Caco-2 (cell line): ENCODE measurements at regions of chr9 and their contacts with region 1.

Region 1: GRCh38 chr9:96854073-96854876 is at the start of gene ZNF782:
- DNase-seq: peak; percentile 93 to 95
- H3K4me3 ChIP-seq: peak within 1 kb of the TSS; percentile 72
- H3K4me3 Mint-ChIP-seq: peak within 1 kb of the TSS; percentile 98
- H3K27ac Mint-ChIP-seq: peak within 1 kb of the TSS; percentile 98
- H3K4me1 ChIP-seq: peaks cover 34% of the 10 kb centered on the region
- H3K4me1 Mint-ChIP-seq: peaks cover 34% of the 10 kb centered on the region
- H3K27me3 ChIP-seq: no peaks in the 10 kb centered on the region
- H3K27me3 Mint-ChIP-seq: no peaks in the 10 kb centered on the region
- CTCF ChIP-seq: no peak
- total RNA-seq, gene ZNF782: 8.1 and 10.3 TPM in 2 replicates

Region 2: GRCh38 chr9:96449845-96450612 is 404.2 kb before region 1 on chr9 and contains the start of gene HABP4:
- CTCF ChIA-PET with region 1: interaction called, 3 read pairs
- POLR2A ChIA-PET with region 1: no interaction called
- intact Hi-C with region 1: loop called (anchors 10 kb)
- DNase-seq: peak; percentile 95 to 97
- H3K4me3 ChIP-seq: peak within 1 kb of the TSS; percentile 89
- H3K4me3 Mint-ChIP-seq: peak within 1 kb of the TSS; percentile 93
- H3K27ac Mint-ChIP-seq: peak within 1 kb of the TSS; percentile 76
- H3K4me1 ChIP-seq: 0 out of 2 replicates have a peak, but pooled peaks cover 3% of the 10 kb centered on the region
- H3K4me1 Mint-ChIP-seq: peaks cover 12% of the 10 kb centered on the region
- H3K27me3 ChIP-seq: no peaks in the 10 kb centered on the region
- H3K27me3 Mint-ChIP-seq: no peaks in the 10 kb centered on the region
- CTCF ChIP-seq: no peak
- total RNA-seq, gene HABP4: 24.8 and 26.7 TPM in 2 replicates

Region 3: GRCh38 chr9:96725576-96725975 is 128.7 kb before region 1 on chr9:
- CTCF ChIA-PET with region 1: no interaction called
- POLR2A ChIA-PET with region 1: no interaction called
- intact Hi-C with region 1: no loop called
- DNase-seq: no peak
- H3K4me3 ChIP-seq: no peak overlapping the region
- H3K4me3 Mint-ChIP-seq: no peak overlapping the region
- H3K27ac Mint-ChIP-seq: no peak overlapping the region
- H3K4me1 ChIP-seq: no peaks in the 10 kb centered on the region
- H3K4me1 Mint-ChIP-seq: no peaks in the 10 kb centered on the region
- H3K27me3 ChIP-seq: no peaks in the 10 kb centered on the region
- H3K27me3 Mint-ChIP-seq: peaks cover 3% of the 10 kb centered on the region
- CTCF ChIP-seq: no peak

Region 4: DNA sequence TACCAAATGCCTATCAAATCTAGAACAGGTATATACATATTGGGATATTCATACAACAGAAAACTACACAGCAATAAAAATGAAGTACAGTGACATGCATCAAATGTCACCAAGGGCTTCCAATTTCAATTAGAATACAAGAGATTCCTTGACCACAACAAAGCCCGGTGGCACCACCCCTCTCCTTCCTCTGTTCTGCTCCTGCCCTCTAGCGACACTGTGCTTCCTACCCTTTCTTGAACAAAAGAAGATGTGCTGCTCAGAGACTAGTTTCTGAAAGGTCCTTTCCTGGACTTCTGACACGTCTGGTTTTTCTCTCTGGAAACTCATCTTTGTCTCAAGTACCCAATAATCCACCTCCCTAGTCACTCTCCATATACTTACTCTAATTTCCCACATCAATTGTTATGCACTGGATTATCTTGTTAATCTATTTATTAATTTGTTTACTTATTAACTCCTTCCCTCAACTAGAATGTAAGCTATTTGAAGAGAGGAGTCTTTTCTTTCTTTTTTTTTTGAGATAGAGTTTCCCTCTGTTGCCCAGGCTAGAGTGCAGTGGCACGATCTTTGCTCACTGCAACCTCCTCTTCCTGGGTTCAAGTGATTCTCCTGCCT is 255.0 kb after region 1 on chr9:
- CTCF ChIA-PET with region 1: interaction called, 11 read pairs
- POLR2A ChIA-PET with region 1: no interaction called
- intact Hi-C with region 1: loop called (anchors 1 kb)
- DNase-seq: peak; percentile 78 to 81
- H3K4me3 ChIP-seq: no peak overlapping the region
- H3K4me3 Mint-ChIP-seq: no peak overlapping the region
- H3K27ac Mint-ChIP-seq: no peak overlapping the region
- H3K4me1 ChIP-seq: no peaks in the 10 kb centered on the region
- H3K4me1 Mint-ChIP-seq: no peaks in the 10 kb centered on the region
- H3K27me3 ChIP-seq: no peaks in the 10 kb centered on the region
- H3K27me3 Mint-ChIP-seq: no peaks in the 10 kb centered on the region
- CTCF ChIP-seq: peak; percentile 69 to 86

Region 5: DNA sequence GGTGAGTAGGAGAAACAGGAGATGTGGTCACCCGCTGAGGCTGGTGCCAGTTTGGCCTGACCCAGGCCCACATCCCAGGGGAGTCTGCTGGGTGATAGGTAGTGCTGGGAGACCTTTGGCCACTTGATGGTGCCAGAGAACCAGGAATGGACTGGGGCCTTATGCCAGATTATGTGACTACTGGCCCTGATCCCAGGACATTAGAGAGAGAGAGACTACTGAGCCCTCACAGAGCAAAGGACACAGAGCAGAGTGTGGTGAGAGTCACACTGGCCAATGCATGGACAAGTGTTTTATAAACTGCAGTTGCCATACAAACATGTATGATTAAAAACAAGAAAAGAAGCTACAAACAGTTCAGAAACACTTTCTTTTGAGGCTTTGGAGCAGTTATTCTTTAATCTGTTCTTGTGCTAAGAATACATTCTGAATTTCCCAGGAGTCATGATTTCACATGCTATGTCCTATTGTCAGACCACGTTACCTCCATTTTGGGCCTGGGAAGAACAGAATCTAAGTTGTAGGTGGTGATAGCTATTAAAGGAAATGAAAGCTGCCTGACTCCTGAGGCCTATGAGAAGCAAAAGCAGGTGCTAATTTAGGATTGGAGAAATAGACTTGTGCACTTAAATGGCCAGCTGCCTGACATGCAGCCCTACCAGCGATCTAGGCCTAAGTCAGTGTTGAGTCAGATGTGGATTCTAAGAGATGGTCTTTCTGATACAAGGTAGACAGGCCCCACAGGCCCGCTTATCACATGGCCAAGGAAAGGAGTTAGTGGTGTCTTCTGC is 614.6 kb after region 1 on chr9:
- CTCF ChIA-PET with region 1: no interaction called
- POLR2A ChIA-PET with region 1: no interaction called
- intact Hi-C with region 1: loop called (anchors 2 kb)
- DNase-seq: peak; percentile 59 to 72
- H3K4me3 ChIP-seq: no peak overlapping the region
- H3K4me3 Mint-ChIP-seq: no peak overlapping the region
- H3K27ac Mint-ChIP-seq: no peak overlapping the region
- H3K4me1 ChIP-seq: no peaks in the 10 kb centered on the region
- H3K4me1 Mint-ChIP-seq: no peaks in the 10 kb centered on the region
- H3K27me3 ChIP-seq: no peaks in the 10 kb centered on the region
- H3K27me3 Mint-ChIP-seq: no peaks in the 10 kb centered on the region
- CTCF ChIP-seq: peak; percentile 67 to 81

Region 6: GRCh38 chr9:97598461-97599288 is 744.4 kb after region 1 on chr9:
- CTCF ChIA-PET with region 1: interaction called, 20 read pairs
- POLR2A ChIA-PET with region 1: no interaction called
- intact Hi-C with region 1: loop called (anchors 1 kb)
- DNase-seq: peak; percentile 80 to 82
- H3K4me3 ChIP-seq: no peak overlapping the region
- H3K4me3 Mint-ChIP-seq: no peak overlapping the region
- H3K27ac Mint-ChIP-seq: no peak overlapping the region
- H3K4me1 ChIP-seq: 0 out of 2 replicates have a peak, but pooled peaks cover 3% of the 10 kb centered on the region
- H3K4me1 Mint-ChIP-seq: peaks cover 8% of the 10 kb centered on the region
- H3K27me3 ChIP-seq: no peaks in the 10 kb centered on the region
- H3K27me3 Mint-ChIP-seq: no peaks in the 10 kb centered on the region
- CTCF ChIP-seq: peak; percentile 83 to 93